ENCODE measurements at regions of chr3 and their contacts with region 1.

Region 1: GRCh38 chr3:18444595-18445400 is 19.7 kb upstream of the SATB1 start:
- DNase-seq: peak; percentile 77 to 83
- ATAC-seq: peak; percentile 97
- H3K4me3 ChIP-seq: peak overlapping the region; percentile 71
- H3K27ac ChIP-seq: no peak overlapping the region
- H3K4me1 ChIP-seq: peaks cover 11% of the 10 kb centered on the region
- H3K27me3 ChIP-seq: peaks cover 0 to 37% (median 10%) of the 10 kb centered on the region in 3 donors
- CTCF ChIP-seq: peak; percentile 61

Region 2: DNA sequence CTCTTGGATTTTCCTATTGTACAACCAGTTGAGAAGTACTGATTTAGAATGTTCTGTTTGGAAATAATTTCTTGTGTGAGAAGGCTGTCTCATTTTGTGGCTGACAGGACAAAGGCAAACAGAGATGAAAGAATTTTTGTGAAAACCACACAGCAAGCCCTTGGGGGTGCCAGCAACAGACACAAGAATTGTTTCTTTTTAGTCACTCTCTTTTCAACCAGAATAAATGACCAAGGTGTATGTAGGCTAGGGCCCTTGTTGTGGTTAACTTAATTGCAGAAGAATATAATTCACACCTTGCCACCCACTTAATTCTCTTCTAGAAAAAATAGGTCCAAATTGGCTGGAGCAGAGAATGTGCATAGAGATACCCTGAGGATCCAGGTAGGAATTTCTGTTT is 373.0 kb before region 1 on chr3:
- intact Hi-C with region 1: no loop called
- DNase-seq: no peak
- ATAC-seq: no peak
- H3K4me3 ChIP-seq: no peak overlapping the region
- H3K27ac ChIP-seq: no peak overlapping the region
- H3K4me1 ChIP-seq: no peaks in the 10 kb centered on the region
- H3K27me3 ChIP-seq: no peaks in the 10 kb centered on the region
- CTCF ChIP-seq: no peak

Region 3: GRCh38 chr3:18177271-18177670 is 267.5 kb before region 1 on chr3:
- intact Hi-C with region 1: no loop called
- DNase-seq: no peak
- ATAC-seq: no peak
- H3K4me3 ChIP-seq: no peak overlapping the region
- H3K27ac ChIP-seq: no peak overlapping the region
- H3K4me1 ChIP-seq: no peaks in the 10 kb centered on the region
- H3K27me3 ChIP-seq: no peaks in the 10 kb centered on the region
- CTCF ChIP-seq: no peak

Region 4: GRCh38 chr3:18428991-18429745 is 15.6 kb before region 1 on chr3:
- intact Hi-C with region 1: loop called in 1 of 2 experiments (anchors 2 kb)
- DNase-seq: no peak
- ATAC-seq: no peak
- H3K4me3 ChIP-seq: no peak overlapping the region
- H3K27ac ChIP-seq: no peak overlapping the region
- H3K4me1 ChIP-seq: no peaks in the 10 kb centered on the region
- H3K27me3 ChIP-seq: peaks cover 0 to 11% (median 0%) of the 10 kb centered on the region in 3 donors
- CTCF ChIP-seq: no peak

Measured in psoas muscle (tissue), 8 donors.